ENCODE measurements at regions of chr20 and their contacts with region 1.

Region 1: DNA sequence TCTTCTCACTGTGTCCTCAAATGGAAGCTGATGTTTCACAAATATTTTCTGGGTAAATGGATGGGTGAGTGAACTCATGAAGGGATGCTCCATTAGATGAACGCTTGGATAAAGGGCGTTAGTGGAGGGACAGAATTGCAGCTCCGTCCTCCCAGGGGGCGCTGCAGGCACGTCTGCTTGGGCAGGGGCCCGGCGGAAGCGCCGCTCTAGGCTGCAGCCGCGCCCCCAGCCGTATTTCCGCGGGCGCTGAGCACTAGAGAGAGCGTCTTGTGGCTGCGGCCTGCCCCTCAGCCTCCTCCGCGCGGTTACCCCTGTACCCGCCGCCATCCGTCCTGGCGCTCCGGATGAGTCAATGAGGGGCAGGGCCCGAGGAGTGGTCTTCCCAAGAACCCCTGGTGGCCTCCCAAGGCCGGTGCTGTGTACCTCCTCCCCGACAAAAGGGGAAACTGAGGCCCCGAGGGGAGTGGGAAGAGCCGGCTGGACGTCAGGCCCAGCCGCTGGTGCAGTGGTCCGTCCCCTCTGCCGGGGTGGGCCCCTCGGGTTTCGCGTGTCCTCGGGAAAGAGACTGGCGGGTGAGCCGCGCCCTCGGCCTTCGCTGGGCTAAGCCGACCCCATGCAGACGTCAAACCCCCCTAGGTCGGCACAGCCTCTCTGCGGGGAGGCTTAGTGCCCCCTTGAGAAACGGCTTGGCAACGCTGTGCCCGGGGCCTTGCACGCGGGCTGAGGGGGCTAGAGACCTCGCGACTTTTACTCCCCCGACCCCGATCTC is 11.5 kb upstream of the SNHG17 start:
- DNase-seq: peak; percentile 91 to 97
- ATAC-seq: peak; percentile 96 to 98 (median 98)
- H3K4me3 ChIP-seq: peak overlapping the region; percentile 97
- H3K4me3 Mint-ChIP-seq: peak overlapping the region; percentile 92
- H3K27ac ChIP-seq: peak overlapping the region; percentile 85
- H3K27ac Mint-ChIP-seq: peak overlapping the region; percentile 81 to 88
- H3K4me1 ChIP-seq: peaks cover 25% of the 10 kb centered on the region
- H3K4me1 Mint-ChIP-seq: peaks cover 22 to 26% of the 10 kb centered on the region in 2 donors
- H3K27me3 ChIP-seq: no peaks in the 10 kb centered on the region
- H3K27me3 Mint-ChIP-seq: peaks cover 10 to 12% of the 10 kb centered on the region in 2 donors
- CTCF ChIP-seq: peak; percentile 100

Region 2: GRCh38 chr20:38387953-38388352 is 58.7 kb before region 1 on chr20:
- intact Hi-C with region 1: no loop called
- DNase-seq: no peak
- ATAC-seq: no peak
- H3K4me3 ChIP-seq: no peak overlapping the region
- H3K4me3 Mint-ChIP-seq: no peak overlapping the region
- H3K27ac ChIP-seq: no peak overlapping the region
- H3K27ac Mint-ChIP-seq: no peak overlapping the region
- H3K4me1 ChIP-seq: no peaks in the 10 kb centered on the region
- H3K4me1 Mint-ChIP-seq: no peaks in the 10 kb centered on the region
- H3K27me3 ChIP-seq: peaks cover 2% of the 10 kb centered on the region
- H3K27me3 Mint-ChIP-seq: peaks cover 9 to 11% of the 10 kb centered on the region in 2 donors
- CTCF ChIP-seq: no peak

Region 3: DNA sequence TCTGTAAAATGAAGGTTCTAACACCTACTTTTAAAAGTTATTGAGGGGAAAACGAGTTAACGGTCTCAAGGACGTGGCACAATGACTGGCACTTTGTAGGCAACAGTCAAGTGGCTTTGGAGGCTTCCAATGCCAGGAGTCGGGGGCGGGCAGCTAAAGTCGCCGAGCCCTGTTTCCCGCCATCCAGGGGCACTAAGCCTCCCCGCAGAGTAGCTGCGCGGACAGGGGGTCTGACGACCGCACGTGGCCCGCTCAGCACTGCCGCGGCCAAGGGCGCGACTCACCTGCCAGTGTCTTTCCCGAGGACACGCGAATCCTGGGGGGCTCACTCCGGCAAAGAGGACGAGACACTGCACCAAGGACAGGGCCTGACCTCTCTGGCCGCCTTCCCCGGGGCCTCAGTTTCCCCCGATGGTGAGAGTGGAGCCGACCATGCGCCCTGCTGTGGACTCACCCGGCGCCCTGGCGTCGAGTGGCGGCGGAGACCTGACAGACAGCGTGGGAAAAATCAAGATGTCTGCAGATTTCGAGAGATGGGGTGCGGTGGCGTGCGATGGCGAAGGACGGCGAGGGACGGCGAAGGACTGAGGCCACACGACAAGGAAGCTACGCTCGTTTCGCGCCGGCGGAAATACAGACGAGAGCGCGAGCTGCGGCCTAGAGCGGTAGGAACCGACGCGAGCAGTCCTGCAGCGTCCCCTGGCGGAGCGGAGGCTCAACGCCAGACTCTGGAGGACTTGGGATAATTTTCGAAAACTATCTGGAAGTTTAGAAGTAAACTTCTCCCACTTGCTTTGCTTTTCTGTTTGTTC is 11.7 kb before region 1 on chr20 and contains the start of gene SNHG17:
- intact Hi-C with region 1: loop called (anchors 1 kb)
- DNase-seq: peak; percentile 87 to 97
- ATAC-seq: peak; percentile 91 to 96 (median 93)
- H3K4me3 ChIP-seq: peak within 1 kb of the TSS; percentile 94
- H3K4me3 Mint-ChIP-seq: peak within 1 kb of the TSS; percentile 93
- H3K27ac ChIP-seq: peak within 1 kb of the TSS; percentile 88
- H3K27ac Mint-ChIP-seq: peak within 1 kb of the TSS; percentile 88 to 92
- H3K4me1 ChIP-seq: peaks cover 19% of the 10 kb centered on the region
- H3K4me1 Mint-ChIP-seq: peaks cover 43 to 44% of the 10 kb centered on the region in 2 donors
- H3K27me3 ChIP-seq: no peaks in the 10 kb centered on the region
- H3K27me3 Mint-ChIP-seq: peaks cover 8 to 10% of the 10 kb centered on the region in 2 donors
- CTCF ChIP-seq: peak; percentile 100
- total RNA-seq, gene SNHG17: 53.5 to 64.0 (median 53.8) TPM

Region 4: GRCh38 chr20:38573413-38573812 is 126.8 kb after region 1 on chr20:
- intact Hi-C with region 1: no loop called
- DNase-seq: no peak
- ATAC-seq: no peak
- H3K4me3 ChIP-seq: no peak overlapping the region
- H3K4me3 Mint-ChIP-seq: no peak overlapping the region
- H3K27ac ChIP-seq: no peak overlapping the region
- H3K27ac Mint-ChIP-seq: no peak overlapping the region
- H3K4me1 ChIP-seq: no peaks in the 10 kb centered on the region
- H3K4me1 Mint-ChIP-seq: no peaks in the 10 kb centered on the region
- H3K27me3 ChIP-seq: no peaks in the 10 kb centered on the region
- H3K27me3 Mint-ChIP-seq: no peaks in the 10 kb centered on the region
- CTCF ChIP-seq: no peak

Measured in natural killer cell (primary cell).